Vagina (tissue), 2 donors: ENCODE measurements at regions of chr22 and their contacts with region 1.

Region 1: DNA sequence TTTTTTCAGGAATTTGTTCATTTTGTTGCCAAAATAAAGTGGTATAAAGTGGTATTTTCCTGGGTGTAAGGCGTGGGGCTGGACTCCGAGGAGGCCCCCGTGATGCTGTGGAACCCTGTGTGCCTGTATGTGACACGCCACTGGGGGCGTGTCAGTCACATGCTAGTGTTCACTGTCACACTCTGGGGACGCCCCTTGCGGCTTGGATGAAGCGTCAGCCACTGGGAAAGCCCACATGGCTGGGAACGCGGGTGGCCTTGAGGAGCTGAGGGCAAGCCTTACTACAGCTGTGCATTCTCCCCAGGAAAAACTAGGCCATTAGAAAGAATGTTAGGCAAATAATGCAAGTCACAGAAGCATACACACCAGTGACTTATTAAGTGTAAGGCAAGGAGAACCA is 77.0 kb upstream of the SLC25A18 start:
- DNase-seq: no peak
- H3K4me3 ChIP-seq: no peak overlapping the region
- H3K27ac ChIP-seq: no peak overlapping the region
- H3K4me1 ChIP-seq: no peaks in the 10 kb centered on the region
- H3K27me3 ChIP-seq: no peaks in the 10 kb centered on the region
- CTCF ChIP-seq: no peak
- POLR2A ChIP-seq: no peak

Region 2: DNA sequence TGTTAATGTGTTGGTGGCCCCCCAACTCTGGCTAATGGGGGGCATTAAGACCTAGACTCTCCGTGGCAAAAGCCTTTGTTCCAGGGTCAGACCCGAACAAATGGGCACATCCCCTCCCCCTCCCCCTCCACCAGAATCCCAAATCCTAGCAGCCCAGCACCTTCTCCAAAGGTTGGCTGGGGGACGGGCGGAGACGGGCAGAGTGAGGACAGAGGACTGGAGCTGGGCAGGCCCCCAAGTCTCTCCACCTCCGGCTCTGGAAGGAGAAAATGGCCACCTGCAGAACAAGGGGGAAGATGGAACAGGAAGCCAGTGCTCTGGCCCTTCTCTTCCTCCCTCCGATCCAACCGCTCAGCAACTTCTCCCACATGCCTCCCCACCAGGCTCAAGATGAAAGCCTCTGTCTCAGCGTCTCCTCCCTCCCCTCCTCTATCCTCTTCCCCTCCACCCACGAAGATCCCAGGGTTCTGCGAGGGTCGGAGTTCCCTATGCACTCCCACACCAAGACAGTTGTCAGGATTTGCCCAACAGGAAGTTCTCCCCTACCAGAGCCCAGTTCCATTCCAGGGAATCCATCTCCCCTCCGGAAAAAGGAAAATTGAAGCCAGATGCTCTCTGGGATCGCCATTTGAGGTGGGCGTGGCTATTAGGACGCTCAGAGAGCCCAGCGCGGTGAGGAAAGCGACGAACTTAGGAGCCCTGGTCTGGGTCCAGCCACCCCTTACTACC is 287.1 kb before region 1 on chr22:
- intact Hi-C with region 1: loop called (anchors 5 kb)
- DNase-seq: no peak
- H3K4me3 ChIP-seq: peak overlapping the region; percentile 21 to 29
- H3K27ac ChIP-seq: no peak overlapping the region
- H3K4me1 ChIP-seq: peaks cover 8% of the 10 kb centered on the region
- H3K27me3 ChIP-seq: no peaks in the 10 kb centered on the region
- CTCF ChIP-seq: no peak
- POLR2A ChIP-seq: no peak